Heart left ventricle (tissue), 16 donors: ENCODE measurements at regions of chr1 and their contacts with region 1.

Region 1: DNA sequence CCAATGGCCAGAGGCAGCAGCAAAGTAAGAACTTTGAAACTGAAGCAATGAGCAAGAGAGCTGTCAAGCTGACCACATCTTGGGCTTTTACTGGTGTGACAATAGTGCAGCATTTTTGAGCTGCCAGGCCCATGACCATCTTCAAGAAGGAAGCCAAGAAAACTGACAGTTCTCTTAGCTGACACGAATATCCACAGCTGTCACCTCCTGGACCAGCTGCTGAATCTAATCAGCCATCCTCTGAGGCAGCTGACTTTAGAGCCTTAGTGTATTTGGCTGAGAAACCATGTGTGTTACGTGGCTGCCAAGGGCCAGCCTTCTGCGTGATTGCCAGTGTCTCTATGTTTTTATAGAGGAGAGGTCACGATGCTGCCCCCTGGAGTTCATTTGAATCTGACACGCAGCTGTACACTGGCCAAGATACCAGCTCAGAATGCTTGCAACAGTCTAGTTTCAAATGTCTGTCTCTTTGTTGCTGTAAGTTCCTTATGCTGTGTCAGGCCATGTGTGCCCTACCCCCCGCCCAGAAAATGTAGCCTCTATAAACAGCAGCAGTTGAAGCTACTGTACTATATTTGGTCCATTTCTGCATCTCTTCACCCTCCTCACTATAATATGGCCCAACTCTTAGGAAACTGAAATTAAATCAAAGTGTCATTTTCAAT is 39.7 kb downstream of the PALMD start:
- DNase-seq: peak; percentile 74 to 90 (median 81)
- ATAC-seq: peak; percentile 79 to 94 (median 88)
- H3K4me3 ChIP-seq: no peak overlapping the region
- H3K27ac ChIP-seq: peak overlapping the region in 11 of 12 donors; percentile 26 to 78 (median 55)
- H3K4me1 ChIP-seq: peaks cover 0 to 66% (median 32%) of the 10 kb centered on the region in 12 donors
- H3K27me3 ChIP-seq: no peaks in the 10 kb centered on the region
- CTCF ChIP-seq: peak; percentile 47 to 76 (median 64)
- POLR2A ChIP-seq: no peak

Region 2: DNA sequence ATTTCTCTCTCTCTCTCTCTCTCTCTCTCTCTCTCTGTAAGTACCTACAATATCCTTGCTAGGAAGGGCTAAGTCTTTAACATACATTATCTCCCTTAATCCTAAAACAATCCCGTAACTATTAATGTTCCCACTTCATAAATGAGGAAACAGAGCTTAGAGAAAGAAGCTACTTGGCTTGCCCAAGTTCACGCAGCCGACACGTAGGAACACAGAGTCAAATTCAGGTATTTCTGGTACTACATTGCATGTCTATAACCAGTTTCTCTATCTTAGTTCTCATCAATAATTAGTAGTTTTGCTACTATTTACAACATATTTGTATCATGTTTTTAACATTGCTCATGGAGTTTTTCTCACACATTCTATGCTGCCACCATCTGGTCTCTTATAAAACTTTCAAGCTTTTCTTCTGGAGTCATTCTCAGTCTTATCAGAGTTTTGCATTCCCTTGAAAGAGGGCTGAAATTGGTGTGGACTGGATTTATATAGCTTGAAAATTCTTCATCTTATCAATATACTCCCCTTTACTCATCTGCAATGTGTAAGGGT is 158.6 kb before region 1 on chr1:
- intact Hi-C with region 1: loop called in 2 of 10 experiments (anchors 5 kb)
- DNase-seq: no peak
- ATAC-seq: peak in 1 of 4 donors; percentile 42
- H3K4me3 ChIP-seq: no peak overlapping the region
- H3K27ac ChIP-seq: no peak overlapping the region
- H3K4me1 ChIP-seq: peaks cover 0 to 23% (median 3%) of the 10 kb centered on the region in 12 donors
- H3K27me3 ChIP-seq: no peaks in the 10 kb centered on the region
- CTCF ChIP-seq: peak in 11 of 12 donors; percentile 6 to 63 (median 42)
- POLR2A ChIP-seq: no peak

Region 3: DNA sequence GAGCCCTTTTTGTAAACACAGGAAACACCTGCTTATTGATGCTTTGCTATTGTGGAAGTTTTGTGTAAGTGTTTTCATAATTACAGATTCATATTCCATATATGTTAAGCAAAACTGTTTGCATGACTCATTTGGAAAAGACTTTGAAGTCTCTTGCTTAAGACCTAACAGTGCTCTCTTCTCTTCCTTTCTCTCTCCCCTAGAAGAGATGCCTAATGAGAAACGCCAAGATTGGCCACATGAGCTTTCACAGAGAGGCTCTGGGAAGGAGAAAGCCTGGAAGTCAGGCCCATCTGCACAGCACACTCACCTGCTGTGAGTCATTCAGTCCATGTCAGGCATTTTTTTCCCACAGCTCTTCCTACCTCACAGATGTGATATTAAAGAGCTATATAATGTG is 141.3 kb before region 1 on chr1:
- intact Hi-C with region 1: loop called in 1 of 10 experiments (anchors 10 kb)
- DNase-seq: no peak
- ATAC-seq: no peak
- H3K4me3 ChIP-seq: no peak overlapping the region
- H3K27ac ChIP-seq: no peak overlapping the region
- H3K4me1 ChIP-seq: peaks cover 1 to 12% (median 7%) of the 10 kb centered on the region in 12 donors
- H3K27me3 ChIP-seq: no peaks in the 10 kb centered on the region
- CTCF ChIP-seq: no peak
- POLR2A ChIP-seq: no peak

Region 4: DNA sequence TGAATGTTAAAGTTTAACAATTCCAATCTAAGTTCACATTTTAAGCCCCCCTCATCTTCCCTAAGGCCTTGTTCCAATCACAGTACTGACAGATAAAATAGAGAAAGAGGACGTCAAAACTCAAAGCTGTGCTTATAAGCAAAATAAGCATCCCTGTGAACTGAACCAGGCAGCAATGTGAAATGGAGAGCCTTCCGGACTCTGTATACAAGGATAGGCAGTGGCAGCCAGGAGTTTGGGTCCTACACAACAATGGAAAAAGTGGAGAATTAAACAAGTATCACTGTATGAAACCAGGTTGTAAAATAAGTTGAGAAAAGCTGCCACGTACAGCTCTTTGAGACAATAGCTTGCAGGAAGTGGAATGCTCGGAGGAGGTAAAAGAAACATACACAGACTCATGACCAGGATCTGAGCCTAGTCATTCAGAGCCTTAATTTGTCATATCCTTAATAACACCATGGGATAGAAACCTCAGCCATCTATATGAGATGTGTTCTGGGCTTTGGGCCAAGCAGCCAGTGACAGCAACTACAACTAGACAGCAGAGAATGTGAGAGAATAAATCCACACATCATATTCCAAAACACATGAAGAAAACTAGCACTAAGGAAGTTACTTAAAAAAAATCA is 95.0 kb before region 1 on chr1:
- intact Hi-C with region 1: loop called in 2 of 10 experiments (anchors 5 to 10 kb)
- DNase-seq: peak in 4 of 5 donors; percentile 52 to 61 (median 60)
- ATAC-seq: peak; percentile 73 to 93 (median 83)
- H3K4me3 ChIP-seq: no peak overlapping the region
- H3K27ac ChIP-seq: peak overlapping the region in 9 of 12 donors; percentile 2 to 81 (median 50)
- H3K4me1 ChIP-seq: peaks cover 0 to 27% (median 10%) of the 10 kb centered on the region in 12 donors
- H3K27me3 ChIP-seq: no peaks in the 10 kb centered on the region
- CTCF ChIP-seq: no peak
- POLR2A ChIP-seq: no peak

Region 5: GRCh38 chr1:99599678-99600175 is 85.9 kb before region 1 on chr1:
- intact Hi-C with region 1: loop called in 2 of 10 experiments (anchors 5 to 10 kb)
- DNase-seq: peak; percentile 24 to 69 (median 66)
- ATAC-seq: peak in 3 of 4 donors; percentile 55 to 90 (median 90)
- H3K4me3 ChIP-seq: no peak overlapping the region
- H3K27ac ChIP-seq: peak overlapping the region in 9 of 12 donors; percentile 0 to 82 (median 55)
- H3K4me1 ChIP-seq: peaks cover 0 to 45% (median 11%) of the 10 kb centered on the region in 12 donors
- H3K27me3 ChIP-seq: no peaks in the 10 kb centered on the region
- CTCF ChIP-seq: no peak
- POLR2A ChIP-seq: no peak

Region 6: GRCh38 chr1:99956755-99957154 is 271.1 kb after region 1 on chr1:
- intact Hi-C with region 1: no loop called
- DNase-seq: no peak
- ATAC-seq: peak in 1 of 4 donors; percentile 34
- H3K4me3 ChIP-seq: no peak overlapping the region
- H3K27ac ChIP-seq: no peak overlapping the region
- H3K4me1 ChIP-seq: no peaks in the 10 kb centered on the region
- H3K27me3 ChIP-seq: no peaks in the 10 kb centered on the region
- CTCF ChIP-seq: no peak
- POLR2A ChIP-seq: no peak